Heart left ventricle (tissue), 16 donors: ENCODE measurements at regions of chr22 and their contacts with region 1.

Region 1: DNA sequence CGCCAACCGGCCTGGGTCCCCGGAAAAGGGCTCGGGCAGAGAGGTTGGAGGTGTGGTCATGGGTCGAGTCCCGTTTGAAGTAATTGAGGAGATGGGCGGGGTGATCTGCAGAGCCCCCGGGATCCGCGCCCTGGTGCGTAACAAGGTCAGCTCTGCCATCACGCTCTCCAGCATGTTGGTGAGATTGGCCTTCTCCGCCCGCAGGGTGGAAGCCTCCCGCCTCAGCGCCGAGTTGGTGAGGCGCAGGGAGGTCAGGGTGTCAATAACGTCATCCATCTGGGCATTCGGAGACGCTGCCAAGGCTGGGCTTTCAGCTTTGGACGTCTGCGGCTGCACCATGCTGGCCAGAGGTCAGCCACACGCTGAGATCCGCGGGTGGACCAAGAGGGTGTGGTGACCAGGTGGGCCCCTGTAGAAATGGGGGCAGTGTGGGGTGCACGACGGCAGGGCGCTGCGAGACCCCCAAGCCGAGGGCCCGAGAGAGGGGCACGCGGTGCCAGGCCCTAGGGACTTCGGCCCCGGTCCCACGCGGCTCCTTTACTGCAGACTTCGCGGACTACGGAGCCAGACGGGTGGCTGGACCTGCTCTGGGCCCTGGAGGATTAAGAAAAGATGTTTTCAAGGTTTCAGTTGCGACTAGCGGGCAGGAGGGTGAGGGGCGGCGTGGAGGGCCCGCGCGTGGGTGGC is 672 bp downstream of the RTL6 start:
- DNase-seq: peak in 1 of 5 donors; percentile 64
- ATAC-seq: peak in 2 of 4 donors; percentile 12 to 14
- H3K4me3 ChIP-seq: peak overlapping the region; percentile 59 to 99 (median 92)
- H3K27ac ChIP-seq: peak overlapping the region; percentile 63 to 92 (median 84)
- H3K4me1 ChIP-seq: peaks cover 0 to 40% (median 12%) of the 10 kb centered on the region in 12 donors
- H3K27me3 ChIP-seq: no peaks in the 10 kb centered on the region
- CTCF ChIP-seq: no peak
- POLR2A ChIP-seq: no peak

Region 2: DNA sequence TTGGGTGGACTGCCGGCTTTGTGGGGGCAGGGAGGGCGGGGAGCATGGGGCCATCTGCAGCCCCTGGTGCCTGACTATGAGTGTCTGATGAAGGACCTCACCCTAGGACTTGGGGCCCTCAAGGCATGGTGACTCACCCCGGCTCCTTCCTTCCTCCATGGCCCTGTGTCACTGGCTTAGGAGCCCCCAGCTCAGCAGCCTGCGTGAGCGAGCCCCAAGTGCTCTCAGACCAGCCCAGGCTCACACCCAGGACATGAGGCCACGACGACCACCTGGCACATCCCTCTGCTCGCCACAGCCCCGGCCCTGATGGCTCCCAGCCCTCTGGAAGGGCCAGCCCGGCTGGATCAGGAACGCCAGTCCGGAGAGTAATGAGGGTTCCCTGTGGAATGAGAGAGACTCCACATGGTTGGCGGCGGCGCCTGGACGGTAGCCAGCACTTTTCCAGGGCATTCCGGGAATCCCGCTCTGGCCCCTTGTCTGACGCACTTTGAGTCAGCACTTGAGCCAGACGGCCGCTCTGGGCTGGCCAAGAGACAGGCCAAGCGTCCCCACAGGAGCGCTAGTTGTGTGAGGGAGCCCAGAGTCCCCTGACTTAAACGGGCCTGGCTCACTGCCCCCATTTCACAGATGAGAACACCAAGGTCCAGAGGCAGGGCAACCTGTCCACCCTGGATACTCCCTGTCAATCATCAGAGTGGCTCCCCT is 133.9 kb before region 1 on chr22:
- intact Hi-C with region 1: loop called in 1 of 10 experiments (anchors 5 kb)
- DNase-seq: peak; percentile 87 to 97 (median 92)
- ATAC-seq: peak; percentile 86 to 92 (median 88)
- H3K4me3 ChIP-seq: peak overlapping the region in 2 of 12 donors; percentile 3 to 15
- H3K27ac ChIP-seq: peak overlapping the region in 10 of 12 donors; percentile 44 to 83 (median 72)
- H3K4me1 ChIP-seq: peaks cover 0 to 48% (median 28%) of the 10 kb centered on the region in 12 donors
- H3K27me3 ChIP-seq: no peaks in the 10 kb centered on the region
- CTCF ChIP-seq: no peak
- POLR2A ChIP-seq: no peak

Region 3: DNA sequence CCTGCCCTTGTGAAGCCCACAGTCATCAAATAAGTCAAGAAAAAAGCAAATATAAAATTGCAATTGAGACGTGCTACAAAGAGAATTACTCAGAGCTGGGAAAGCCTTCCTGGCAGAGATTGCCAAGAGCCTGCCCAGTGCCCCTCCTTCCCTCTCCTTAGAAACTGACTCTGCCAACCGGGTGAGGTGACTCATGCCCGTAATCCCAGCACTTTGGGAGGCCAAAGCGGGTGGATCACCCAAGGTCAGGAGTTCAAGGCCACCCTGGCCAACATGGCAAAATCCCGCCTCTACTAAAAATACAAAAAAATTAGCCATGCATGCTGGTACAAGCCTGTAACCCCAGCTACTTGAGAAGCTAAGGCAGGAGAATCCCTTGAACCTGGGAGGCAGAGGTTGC is 76.7 kb after region 1 on chr22:
- intact Hi-C with region 1: loop called in 1 of 10 experiments (anchors 10 kb)
- DNase-seq: peak in 2 of 5 donors; percentile 61 to 70
- ATAC-seq: peak in 3 of 4 donors; percentile 41 to 81 (median 63)
- H3K4me3 ChIP-seq: no peak overlapping the region
- H3K27ac ChIP-seq: no peak overlapping the region
- H3K4me1 ChIP-seq: peaks cover 0 to 25% (median 5%) of the 10 kb centered on the region in 12 donors
- H3K27me3 ChIP-seq: peaks cover 0 to 8% (median 0%) of the 10 kb centered on the region in 9 donors
- CTCF ChIP-seq: no peak
- POLR2A ChIP-seq: no peak

Region 4: GRCh38 chr22:44586999-44587736 is 89.8 kb after region 1 on chr22:
- intact Hi-C with region 1: no loop called
- DNase-seq: peak in 2 of 5 donors; percentile 18 to 33
- ATAC-seq: no peak
- H3K4me3 ChIP-seq: no peak overlapping the region
- H3K27ac ChIP-seq: no peak overlapping the region
- H3K4me1 ChIP-seq: no peaks in the 10 kb centered on the region
- H3K27me3 ChIP-seq: peaks cover 0 to 7% (median 0%) of the 10 kb centered on the region in 9 donors
- CTCF ChIP-seq: no peak
- POLR2A ChIP-seq: no peak

Region 5: DNA sequence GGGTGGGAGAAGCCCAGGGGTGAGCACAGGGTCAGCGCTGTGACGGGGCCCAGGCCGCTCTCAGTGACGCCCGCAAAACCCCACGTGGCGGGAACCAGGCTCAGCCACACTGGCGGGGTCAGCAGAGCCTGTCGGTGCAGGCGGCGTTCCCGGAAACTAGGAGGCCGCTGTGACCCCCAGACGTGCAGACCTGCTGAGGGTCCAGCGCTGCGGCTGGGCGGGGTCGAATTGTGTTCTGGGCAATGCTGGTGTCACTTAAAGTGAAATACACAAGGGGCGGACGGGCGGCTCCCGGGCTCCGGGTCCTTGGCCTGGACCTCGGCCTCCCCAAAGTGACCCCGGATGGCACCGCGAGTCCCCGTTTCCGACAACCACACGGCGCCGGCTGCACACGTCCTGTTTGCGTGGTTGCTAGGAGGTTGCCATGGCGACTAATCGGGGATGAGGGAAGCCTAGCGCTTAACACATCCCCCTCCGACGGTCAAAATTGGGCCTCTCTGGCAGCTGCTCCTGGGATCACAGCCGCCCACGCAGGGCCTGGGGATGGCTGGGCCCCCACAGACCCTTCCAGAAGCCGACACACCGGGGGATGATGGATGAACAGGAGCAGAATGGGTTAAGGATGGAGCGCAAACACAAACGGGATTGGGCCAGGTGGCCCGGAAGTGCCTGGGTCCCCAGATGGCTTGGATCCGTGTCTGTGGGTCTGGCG is 122.9 kb after region 1 on chr22:
- intact Hi-C with region 1: loop called in 1 of 10 experiments (anchors 5 kb)
- DNase-seq: peak; percentile 78 to 88 (median 81)
- ATAC-seq: peak; percentile 48 to 80 (median 56)
- H3K4me3 ChIP-seq: peak overlapping the region in 4 of 12 donors; percentile 8 to 35 (median 16)
- H3K27ac ChIP-seq: peak overlapping the region in 5 of 12 donors; percentile 38 to 61 (median 44)
- H3K4me1 ChIP-seq: peaks cover 0 to 22% (median 4%) of the 10 kb centered on the region in 12 donors
- H3K27me3 ChIP-seq: peaks cover 0 to 14% (median 2%) of the 10 kb centered on the region in 9 donors
- CTCF ChIP-seq: no peak
- POLR2A ChIP-seq: no peak